ENCODE measurements at regions of chr11 and their contacts with region 1.

Region 1: DNA sequence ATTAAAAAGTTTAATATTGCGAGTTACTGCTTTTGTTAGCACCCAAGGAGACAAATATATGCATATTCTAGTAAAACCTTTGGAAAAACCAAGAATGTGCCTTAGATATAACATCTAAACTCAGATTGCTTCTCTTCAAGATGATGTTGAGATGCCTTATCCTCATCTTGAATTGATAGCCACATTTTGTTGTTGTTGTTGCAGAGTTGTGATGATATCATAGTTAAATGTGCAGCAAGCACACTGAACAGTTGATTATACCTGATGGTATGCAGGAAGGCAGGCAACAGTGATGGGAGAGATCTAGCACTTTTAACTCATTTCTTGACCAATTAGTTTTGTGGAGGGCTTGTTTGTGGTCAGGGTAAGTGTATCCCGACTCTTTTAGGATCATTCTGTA is 48.0 kb downstream of the KDM2A start:
- DNase-seq: no peak
- H3K4me3 ChIP-seq: no peak overlapping the region
- H3K27ac ChIP-seq: no peak overlapping the region
- H3K4me1 ChIP-seq: no peaks in the 10 kb centered on the region
- H3K27me3 ChIP-seq: no peaks in the 10 kb centered on the region
- CTCF ChIP-seq: no peak
- POLR2A ChIP-seq: no peak

Region 2: DNA sequence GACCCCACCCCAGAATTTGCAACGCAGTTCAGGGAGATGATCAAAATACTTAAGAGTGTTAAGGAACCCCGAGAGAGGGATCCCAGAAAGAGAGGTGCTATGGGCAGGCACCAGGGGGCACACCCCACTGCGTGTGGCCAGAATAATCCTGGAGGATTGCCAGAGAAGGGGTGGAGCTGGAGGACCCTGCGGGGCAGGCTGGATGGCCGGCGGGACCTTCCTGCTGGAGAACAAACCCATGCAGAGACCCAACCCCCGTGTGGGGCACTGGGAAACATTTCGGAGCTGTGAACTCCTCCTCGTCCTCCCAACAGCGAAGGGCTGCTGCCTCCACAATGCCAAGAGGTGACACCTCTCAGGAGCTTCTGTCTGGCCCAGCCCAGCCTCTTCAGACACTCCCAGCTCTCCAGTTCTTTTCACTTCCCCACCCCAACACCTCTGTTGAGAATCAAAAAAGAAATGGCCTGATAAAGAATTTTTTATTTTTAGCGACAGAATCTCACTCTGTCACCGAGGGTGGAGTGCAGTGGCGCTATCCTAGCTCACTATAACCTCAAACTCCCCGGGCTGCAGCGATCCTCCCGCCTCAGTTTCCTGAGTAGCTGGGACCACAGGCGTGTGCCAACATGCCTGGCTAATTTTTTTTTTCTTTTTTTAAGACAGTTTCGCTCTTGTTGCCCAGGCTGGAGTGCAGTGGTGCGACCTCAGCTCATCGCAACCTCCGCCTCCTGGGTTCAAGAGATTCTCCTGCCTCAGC is 84.9 kb before region 1 on chr11:
- intact Hi-C with region 1: loop called (anchors 2 kb)
- DNase-seq: peak in 1 of 2 donors; percentile 26
- H3K4me3 ChIP-seq: no peak overlapping the region
- H3K27ac ChIP-seq: no peak overlapping the region
- H3K4me1 ChIP-seq: no peaks in the 10 kb centered on the region
- H3K27me3 ChIP-seq: no peaks in the 10 kb centered on the region
- CTCF ChIP-seq: no peak
- POLR2A ChIP-seq: no peak

Region 3: GRCh38 chr11:67266424-67267187 is 99.5 kb after region 1 on chr11 and contains the start of gene GRK2:
- intact Hi-C with region 1: no loop called
- DNase-seq: peak; percentile 42 to 46
- H3K4me3 ChIP-seq: peak within 1 kb of the TSS; percentile 85 to 95
- H3K27ac ChIP-seq: peak within 1 kb of the TSS; percentile 87 to 88
- H3K4me1 ChIP-seq: peaks cover 18 to 27% of the 10 kb centered on the region in 2 donors
- H3K27me3 ChIP-seq: no peaks in the 10 kb centered on the region
- CTCF ChIP-seq: no peak
- POLR2A ChIP-seq: no peak
- total RNA-seq, gene GRK2: 25.0 to 93.8 (median 64.2) TPM

Measured in uterus (tissue), 4 donors.